Right lobe of liver (tissue), 6 donors: ENCODE measurements at regions of chr11 and their contacts with region 1.

Region 1: GRCh38 chr11:125941619-125942611 is 3.9 kb upstream of the VSIG10L2 start:
- DNase-seq: peak; percentile 69 to 72 (median 71)
- ATAC-seq: peak; percentile 90 to 97 (median 92)
- H3K4me3 ChIP-seq: no peak overlapping the region
- H3K27ac ChIP-seq: no peak overlapping the region
- H3K4me1 ChIP-seq: no peaks in the 10 kb centered on the region
- H3K27me3 ChIP-seq: no peaks in the 10 kb centered on the region
- CTCF ChIP-seq: peak; percentile 65 to 82 (median 73)
- POLR2A ChIP-seq: no peak

Region 2: DNA sequence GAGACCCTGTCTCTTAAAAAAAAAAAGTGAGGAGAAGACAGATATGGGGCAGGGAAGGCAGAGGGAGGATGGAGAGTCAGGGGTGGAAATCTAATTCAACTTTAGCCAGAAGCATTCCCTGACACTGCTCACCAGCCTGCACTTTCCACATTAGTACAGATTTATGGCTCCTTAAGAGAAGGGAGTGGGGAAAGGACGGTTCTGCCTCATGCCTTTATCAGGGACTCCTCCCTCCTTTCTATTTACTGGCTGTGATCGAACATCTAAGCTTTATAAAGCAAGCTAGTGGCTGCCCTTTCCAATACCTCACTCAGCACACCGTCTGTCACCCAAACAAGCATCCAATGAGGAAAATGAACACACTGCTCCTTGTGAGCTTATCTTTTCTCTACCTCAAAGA is 108.9 kb before region 1 on chr11 and contains the start of gene PATE4:
- intact Hi-C with region 1: no loop called
- DNase-seq: no peak
- ATAC-seq: no peak
- H3K4me3 ChIP-seq: no peak within 1 kb of the TSS
- H3K27ac ChIP-seq: no peak within 1 kb of the TSS
- H3K4me1 ChIP-seq: no peaks in the 10 kb centered on the region
- H3K27me3 ChIP-seq: no peaks in the 10 kb centered on the region
- CTCF ChIP-seq: no peak
- POLR2A ChIP-seq: no peak
- total RNA-seq, gene PATE4: not detected

Region 3: GRCh38 chr11:126039485-126040271 is 97.8 kb after region 1 on chr11:
- intact Hi-C with region 1: loop called in 1 of 2 experiments (anchors 10 kb)
- DNase-seq: no peak
- ATAC-seq: no peak
- H3K4me3 ChIP-seq: no peak overlapping the region
- H3K27ac ChIP-seq: no peak overlapping the region
- H3K4me1 ChIP-seq: peaks cover 0 to 18% (median 0%) of the 10 kb centered on the region in 4 donors
- H3K27me3 ChIP-seq: no peaks in the 10 kb centered on the region
- CTCF ChIP-seq: no peak
- POLR2A ChIP-seq: no peak

Region 4: GRCh38 chr11:126229858-126230540 is 288.1 kb after region 1 on chr11:
- intact Hi-C with region 1: no loop called
- DNase-seq: no peak
- ATAC-seq: no peak
- H3K4me3 ChIP-seq: no peak overlapping the region
- H3K27ac ChIP-seq: no peak overlapping the region
- H3K4me1 ChIP-seq: peaks cover 0 to 11% (median 0%) of the 10 kb centered on the region in 4 donors
- H3K27me3 ChIP-seq: no peaks in the 10 kb centered on the region
- CTCF ChIP-seq: no peak
- POLR2A ChIP-seq: no peak